ENCODE measurements at regions of chr10 and their contacts with region 1.

Region 1: GRCh38 chr10:124719213-124719851 is 24.8 kb downstream of the FAM53B start:
- DNase-seq: peak; percentile 82
- H3K4me3 Mint-ChIP-seq: peak overlapping the region; percentile 64
- H3K27ac Mint-ChIP-seq: peak overlapping the region; percentile 84
- H3K4me1 Mint-ChIP-seq: peaks cover 89% of the 10 kb centered on the region
- H3K27me3 Mint-ChIP-seq: no peaks in the 10 kb centered on the region

Region 2: GRCh38 chr10:124647421-124648130 is 71.8 kb before region 1 on chr10:
- CTCF ChIA-PET with region 1: interaction called, 18 read pairs
- intact Hi-C with region 1: loop called (anchors 1 kb)
- DNase-seq: peak; percentile 88
- H3K4me3 Mint-ChIP-seq: peak overlapping the region; percentile 49
- H3K27ac Mint-ChIP-seq: peak overlapping the region; percentile 73
- H3K4me1 Mint-ChIP-seq: peaks cover 69% of the 10 kb centered on the region
- H3K27me3 Mint-ChIP-seq: no peaks in the 10 kb centered on the region

Region 3: GRCh38 chr10:124688889-124689670 is 30.3 kb before region 1 on chr10:
- CTCF ChIA-PET with region 1: interaction called, 58 read pairs
- intact Hi-C with region 1: loop called (anchors 1 kb)
- DNase-seq: peak; percentile 83
- H3K4me3 Mint-ChIP-seq: no peak overlapping the region
- H3K27ac Mint-ChIP-seq: peak overlapping the region; percentile 46
- H3K4me1 Mint-ChIP-seq: peaks cover 74% of the 10 kb centered on the region
- H3K27me3 Mint-ChIP-seq: no peaks in the 10 kb centered on the region

Region 4: DNA sequence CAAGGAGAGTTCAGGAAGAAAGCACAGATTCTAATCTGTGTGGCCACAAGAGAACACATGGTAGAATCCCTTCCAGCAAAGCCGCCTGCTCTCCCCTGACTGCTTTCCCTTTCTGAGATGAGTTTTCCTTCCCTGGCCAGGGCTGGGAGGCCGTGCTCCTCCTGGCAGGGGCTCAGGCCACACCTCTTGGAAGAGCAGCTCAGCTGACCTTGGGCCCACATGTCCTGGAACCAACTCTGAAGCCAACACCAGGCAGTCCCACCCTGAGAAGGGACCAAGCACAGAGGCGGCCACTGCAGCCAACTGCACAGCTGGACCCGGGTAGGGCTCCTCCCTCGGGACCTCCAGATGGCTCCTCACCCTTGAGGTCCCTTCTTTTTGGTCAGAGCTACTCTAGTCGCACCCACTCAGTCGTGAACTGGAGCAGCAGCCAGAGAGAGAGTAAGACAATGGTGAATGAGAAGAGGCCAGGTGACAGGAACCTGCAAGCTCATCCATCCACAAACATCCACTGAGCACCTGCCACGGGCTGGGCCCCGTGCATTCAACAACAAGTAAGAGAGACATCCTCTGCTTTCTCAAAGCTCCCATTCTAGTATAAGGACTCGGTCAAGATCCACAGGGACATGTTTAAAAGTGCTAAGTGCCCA is 15.4 kb before region 1 on chr10:
- CTCF ChIA-PET with region 1: interaction called, 67 read pairs
- intact Hi-C with region 1: loop called (anchors 1 kb)
- DNase-seq: no peak
- H3K4me3 Mint-ChIP-seq: no peak overlapping the region
- H3K27ac Mint-ChIP-seq: no peak overlapping the region
- H3K4me1 Mint-ChIP-seq: peaks cover 83% of the 10 kb centered on the region
- H3K27me3 Mint-ChIP-seq: no peaks in the 10 kb centered on the region

Region 5: DNA sequence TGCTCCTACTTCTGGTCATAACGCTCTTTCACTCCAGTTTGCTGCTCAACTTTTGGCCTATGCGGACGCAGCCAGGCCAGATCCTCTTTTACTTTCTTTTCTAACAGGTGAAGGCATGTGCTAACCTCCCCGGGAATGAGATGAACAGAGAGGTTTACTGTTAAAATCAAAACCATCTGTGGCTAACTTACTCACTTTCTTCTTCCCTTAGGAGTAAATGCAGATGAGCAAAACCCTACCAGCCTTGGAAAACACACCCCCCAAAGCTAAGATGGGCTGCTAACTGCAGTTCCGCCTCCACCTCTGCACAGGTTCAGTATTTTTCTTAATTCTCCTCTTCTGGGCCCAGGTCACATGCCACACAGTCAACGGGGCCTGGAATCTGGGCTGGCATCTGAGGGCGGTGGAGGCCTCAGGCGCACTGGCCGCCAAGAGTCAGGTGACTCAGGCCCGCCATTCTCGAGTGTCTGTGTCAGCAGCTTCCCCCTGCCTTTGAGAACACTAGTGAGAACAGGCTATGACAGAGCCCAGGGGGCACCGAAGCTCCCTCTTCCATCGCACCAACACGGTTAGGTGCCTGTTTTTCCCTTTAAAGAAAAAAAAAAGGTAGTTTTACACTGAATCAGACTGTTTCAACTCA is 13.7 kb after region 1 on chr10:
- CTCF ChIA-PET with region 1: interaction called, 85 read pairs
- intact Hi-C with region 1: loop called (anchors 1 kb)
- DNase-seq: peak; percentile 82
- H3K4me3 Mint-ChIP-seq: peak overlapping the region; percentile 53
- H3K27ac Mint-ChIP-seq: peak overlapping the region; percentile 77
- H3K4me1 Mint-ChIP-seq: peaks cover 82% of the 10 kb centered on the region
- H3K27me3 Mint-ChIP-seq: no peaks in the 10 kb centered on the region

Region 6: GRCh38 chr10:124820121-124820520 is 100.8 kb after region 1 on chr10:
- CTCF ChIA-PET with region 1: no interaction called
- intact Hi-C with region 1: no loop called
- DNase-seq: no peak
- H3K4me3 Mint-ChIP-seq: no peak overlapping the region
- H3K27ac Mint-ChIP-seq: no peak overlapping the region
- H3K4me1 Mint-ChIP-seq: no peaks in the 10 kb centered on the region
- H3K27me3 Mint-ChIP-seq: no peaks in the 10 kb centered on the region

Region 7: GRCh38 chr10:124864421-124865193 is 145.3 kb after region 1 on chr10:
- CTCF ChIA-PET with region 1: no interaction called
- intact Hi-C with region 1: no loop called
- DNase-seq: no peak
- H3K4me3 Mint-ChIP-seq: no peak overlapping the region
- H3K27ac Mint-ChIP-seq: no peak overlapping the region
- H3K4me1 Mint-ChIP-seq: no peaks in the 10 kb centered on the region
- H3K27me3 Mint-ChIP-seq: no peaks in the 10 kb centered on the region

Region 8: GRCh38 chr10:124898471-124898870 is 179.1 kb after region 1 on chr10:
- CTCF ChIA-PET with region 1: no interaction called
- intact Hi-C with region 1: no loop called
- DNase-seq: no peak
- H3K4me3 Mint-ChIP-seq: no peak overlapping the region
- H3K27ac Mint-ChIP-seq: no peak overlapping the region
- H3K4me1 Mint-ChIP-seq: no peaks in the 10 kb centered on the region
- H3K27me3 Mint-ChIP-seq: peaks cover 13% of the 10 kb centered on the region

Measured in activated naive CD4-positive, alpha-beta T cell treated with anti-CD3 and anti-CD28 coated beads for 36 hours (primary cell).